CD4-positive, alpha-beta T cell (primary cell): ENCODE measurements at regions of chr2 and their contacts with region 1.

Region 1: GRCh38 chr2:113889471-113890252 is at the start of gene ACTR3:
- DNase-seq: peak; percentile 96 to 99 (median 97)
- ATAC-seq: peak; percentile 84
- H3K4me3 ChIP-seq: peak within 1 kb of the TSS; percentile 86
- H3K4me3 Mint-ChIP-seq: peak within 1 kb of the TSS; percentile 98
- H3K27ac ChIP-seq: peak within 1 kb of the TSS; percentile 96 to 98
- H3K27ac Mint-ChIP-seq: peak within 1 kb of the TSS; percentile 94
- H3K4me1 ChIP-seq: peaks cover 40% of the 10 kb centered on the region
- H3K4me1 Mint-ChIP-seq: peaks cover 85% of the 10 kb centered on the region
- H3K27me3 ChIP-seq: no peaks in the 10 kb centered on the region
- H3K27me3 Mint-ChIP-seq: no peaks in the 10 kb centered on the region
- CTCF ChIP-seq: no peak
- total RNA-seq, gene ACTR3: 118 to 123 TPM

Region 2: DNA sequence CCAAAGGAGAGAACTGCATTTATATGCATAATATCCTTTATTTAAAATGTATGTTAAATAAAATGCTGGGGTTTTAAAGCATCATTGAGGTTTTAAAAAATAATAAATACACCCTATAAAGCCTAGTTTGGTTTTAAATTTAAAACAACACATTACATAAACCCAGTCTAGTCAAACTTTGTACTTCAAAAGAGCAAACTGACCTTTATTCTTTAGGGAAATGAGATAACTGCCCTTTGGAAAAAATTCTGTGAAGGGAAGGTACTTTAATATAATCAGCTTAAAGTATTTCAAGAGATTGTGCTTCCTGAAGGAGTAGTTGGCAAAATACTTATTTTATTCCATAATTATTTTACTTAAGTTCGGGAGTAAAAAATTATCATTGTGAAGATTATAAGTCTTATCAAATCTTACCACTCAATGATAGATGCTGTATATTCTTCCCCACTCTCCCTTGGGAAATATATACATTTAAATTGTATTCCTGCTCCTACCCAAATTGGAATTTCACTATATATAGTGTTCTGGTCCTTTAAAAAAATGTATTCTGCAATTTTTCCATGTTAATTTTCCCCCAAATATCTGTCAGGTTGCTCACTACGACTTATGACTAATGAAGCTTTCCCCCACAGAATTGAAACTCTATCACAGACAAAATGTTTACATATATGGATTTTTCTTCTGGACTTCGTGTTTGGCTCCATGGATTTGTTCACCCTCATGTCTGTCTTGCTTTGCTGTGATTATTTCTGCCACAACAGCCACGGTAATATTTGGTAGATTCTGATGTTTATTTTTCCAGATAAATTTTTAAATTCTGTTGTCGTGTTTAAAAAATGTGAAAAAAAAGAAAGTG is 1572.1 kb before region 1 on chr2:
- CTCF ChIA-PET with region 1: no interaction called
- POLR2A ChIA-PET with region 1: no interaction called
- intact Hi-C with region 1: no loop called
- DNase-seq: no peak
- ATAC-seq: no peak
- H3K4me3 ChIP-seq: no peak overlapping the region
- H3K4me3 Mint-ChIP-seq: no peak overlapping the region
- H3K27ac ChIP-seq: no peak overlapping the region
- H3K27ac Mint-ChIP-seq: no peak overlapping the region
- H3K4me1 ChIP-seq: no peaks in the 10 kb centered on the region
- H3K4me1 Mint-ChIP-seq: no peaks in the 10 kb centered on the region
- H3K27me3 ChIP-seq: no peaks in the 10 kb centered on the region
- H3K27me3 Mint-ChIP-seq: no peaks in the 10 kb centered on the region
- CTCF ChIP-seq: no peak

Region 3: GRCh38 chr2:112481050-112481527 is 1408.6 kb before region 1 on chr2:
- CTCF ChIA-PET with region 1: no interaction called
- POLR2A ChIA-PET with region 1: no interaction called
- intact Hi-C with region 1: loop called in 1 of 2 experiments (anchors 5 kb)
- DNase-seq: peak; percentile 72 to 91 (median 79)
- ATAC-seq: peak; percentile 81
- H3K4me3 ChIP-seq: peak overlapping the region; percentile 77
- H3K4me3 Mint-ChIP-seq: peak overlapping the region; percentile 93
- H3K27ac ChIP-seq: peak overlapping the region; percentile 48 to 75
- H3K27ac Mint-ChIP-seq: peak overlapping the region; percentile 85
- H3K4me1 ChIP-seq: peaks cover 28% of the 10 kb centered on the region
- H3K4me1 Mint-ChIP-seq: peaks cover 25% of the 10 kb centered on the region
- H3K27me3 ChIP-seq: no peaks in the 10 kb centered on the region
- H3K27me3 Mint-ChIP-seq: no peaks in the 10 kb centered on the region
- CTCF ChIP-seq: peak; percentile 84

Region 4: DNA sequence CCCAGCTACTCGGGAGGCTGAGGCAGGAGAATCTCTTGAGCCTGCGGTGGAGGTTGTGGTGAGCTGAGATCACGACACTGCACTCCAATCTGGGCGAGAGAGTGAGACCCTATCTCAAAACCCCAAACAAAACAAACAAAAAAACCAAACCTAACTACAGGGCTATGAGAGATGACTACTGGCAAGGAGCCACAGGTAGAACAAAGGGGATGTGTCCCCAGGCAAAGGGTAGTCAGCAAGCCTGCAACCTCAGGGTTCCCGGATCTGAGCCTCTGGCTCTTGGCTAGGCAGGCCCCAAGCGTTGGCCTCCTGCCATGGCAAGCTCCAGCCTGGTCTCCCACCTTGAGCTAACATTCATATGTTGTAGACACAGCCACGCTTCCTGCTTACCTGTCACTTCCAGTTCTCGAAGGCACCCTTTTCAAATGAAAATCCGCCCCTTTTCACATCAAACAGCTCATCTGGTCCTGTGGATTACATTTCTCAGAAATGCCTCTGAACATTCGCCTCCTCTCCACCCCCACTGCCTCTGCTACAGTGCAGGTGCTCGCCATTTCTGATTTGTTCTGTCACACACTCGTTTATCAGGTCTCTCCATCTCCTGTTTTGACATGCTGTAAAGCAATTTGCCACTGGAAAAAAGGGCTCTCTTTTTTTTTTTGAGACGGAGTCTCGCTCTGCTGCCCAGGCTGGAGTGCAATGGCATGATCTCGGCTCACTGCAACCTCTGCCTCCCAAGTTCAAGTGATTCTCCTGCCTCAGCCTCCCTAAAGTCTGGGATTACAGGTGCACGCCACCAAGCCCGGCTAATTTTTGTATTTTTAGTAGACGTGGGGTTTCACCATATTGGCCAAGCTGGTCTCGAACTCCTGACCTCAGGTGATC is 12.9 kb before region 1 on chr2:
- CTCF ChIA-PET with region 1: interaction called, 6 read pairs
- POLR2A ChIA-PET with region 1: interaction called, 43 read pairs
- intact Hi-C with region 1: loop called in 1 of 2 experiments (anchors 1 kb)
- DNase-seq: peak; percentile 48 to 89 (median 74)
- ATAC-seq: peak; percentile 89
- H3K4me3 ChIP-seq: peak overlapping the region; percentile 11
- H3K4me3 Mint-ChIP-seq: peak overlapping the region; percentile 36
- H3K27ac ChIP-seq: peak overlapping the region; percentile 68 to 73
- H3K27ac Mint-ChIP-seq: peak overlapping the region; percentile 87
- H3K4me1 ChIP-seq: peaks cover 21% of the 10 kb centered on the region
- H3K4me1 Mint-ChIP-seq: peaks cover 59% of the 10 kb centered on the region
- H3K27me3 ChIP-seq: no peaks in the 10 kb centered on the region
- H3K27me3 Mint-ChIP-seq: no peaks in the 10 kb centered on the region
- CTCF ChIP-seq: no peak

Region 5: GRCh38 chr2:113910110-113910717 is 20.6 kb after region 1 on chr2:
- CTCF ChIA-PET with region 1: interaction called, 6 read pairs
- POLR2A ChIA-PET with region 1: interaction called, 9 read pairs
- intact Hi-C with region 1: loop called in 1 of 2 experiments (anchors 2 kb)
- DNase-seq: peak in 12 of 14 experiments; percentile 16 to 61 (median 44)
- ATAC-seq: peak; percentile 86
- H3K4me3 ChIP-seq: no peak overlapping the region
- H3K4me3 Mint-ChIP-seq: peak overlapping the region; percentile 60
- H3K27ac ChIP-seq: peak overlapping the region in 1 of 2 donors; percentile 2
- H3K27ac Mint-ChIP-seq: peak overlapping the region; percentile 84
- H3K4me1 ChIP-seq: peaks cover 22% of the 10 kb centered on the region
- H3K4me1 Mint-ChIP-seq: peaks cover 86% of the 10 kb centered on the region
- H3K27me3 ChIP-seq: no peaks in the 10 kb centered on the region
- H3K27me3 Mint-ChIP-seq: no peaks in the 10 kb centered on the region
- CTCF ChIP-seq: no peak

Region 6: GRCh38 chr2:113940891-113941290 is 51.2 kb after region 1 on chr2:
- CTCF ChIA-PET with region 1: no interaction called
- POLR2A ChIA-PET with region 1: no interaction called
- intact Hi-C with region 1: loop called in 1 of 2 experiments (anchors 10 kb)
- DNase-seq: no peak
- ATAC-seq: no peak
- H3K4me3 ChIP-seq: no peak overlapping the region
- H3K4me3 Mint-ChIP-seq: no peak overlapping the region
- H3K27ac ChIP-seq: no peak overlapping the region
- H3K27ac Mint-ChIP-seq: no peak overlapping the region
- H3K4me1 ChIP-seq: no peaks in the 10 kb centered on the region
- H3K4me1 Mint-ChIP-seq: peaks cover 14% of the 10 kb centered on the region
- H3K27me3 ChIP-seq: no peaks in the 10 kb centered on the region
- H3K27me3 Mint-ChIP-seq: no peaks in the 10 kb centered on the region
- CTCF ChIP-seq: no peak

Region 7: GRCh38 chr2:114005110-114005783 is 115.6 kb after region 1 on chr2:
- CTCF ChIA-PET with region 1: no interaction called
- POLR2A ChIA-PET with region 1: no interaction called
- intact Hi-C with region 1: no loop called
- DNase-seq: no peak
- ATAC-seq: no peak
- H3K4me3 ChIP-seq: no peak overlapping the region
- H3K4me3 Mint-ChIP-seq: no peak overlapping the region
- H3K27ac ChIP-seq: no peak overlapping the region
- H3K27ac Mint-ChIP-seq: no peak overlapping the region
- H3K4me1 ChIP-seq: no peaks in the 10 kb centered on the region
- H3K4me1 Mint-ChIP-seq: no peaks in the 10 kb centered on the region
- H3K27me3 ChIP-seq: no peaks in the 10 kb centered on the region
- H3K27me3 Mint-ChIP-seq: peaks cover 13% of the 10 kb centered on the region
- CTCF ChIP-seq: no peak